Activated CD4-positive, alpha-beta memory T cell treated with anti-CD3 and anti-CD28 coated beads, Interleukin-2, amount 10 ng/mL, durations not matched to agents 7 days and 5 days (primary cell): ENCODE measurements at regions of chr9 and their contacts with region 1.

Region 1: GRCh38 chr9:100352727-100353505 is at the start of gene TEX10:
- DNase-seq: peak; percentile 89
- H3K4me3 Mint-ChIP-seq: peak within 1 kb of the TSS; percentile 91
- H3K27ac Mint-ChIP-seq: peak within 1 kb of the TSS; percentile 77
- H3K4me1 Mint-ChIP-seq: peaks cover 44% of the 10 kb centered on the region
- H3K27me3 Mint-ChIP-seq: no peaks in the 10 kb centered on the region
- total RNA-seq, gene TEX10: 14.8 to 16.5 TPM

Region 2: DNA sequence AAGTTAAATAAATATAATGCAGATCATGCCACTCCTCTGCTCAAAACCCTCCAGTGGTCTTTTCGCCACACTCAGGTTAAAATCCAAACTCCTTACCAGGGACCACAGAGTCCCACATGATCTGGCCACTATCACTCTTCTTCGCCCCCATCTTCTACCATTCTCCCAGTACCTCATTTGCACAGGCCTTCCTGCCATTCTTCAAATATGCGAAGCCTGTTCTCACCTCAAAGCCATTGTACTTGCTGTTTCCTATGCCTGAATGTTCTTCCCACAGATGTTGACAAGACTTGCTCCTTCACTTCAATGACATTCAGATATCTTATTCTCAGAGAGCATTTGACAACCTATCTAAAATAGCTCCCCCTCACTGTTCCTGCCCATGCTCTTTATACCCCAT is 11.0 kb before region 1 on chr9:
- CTCF ChIA-PET with region 1: interaction called, 4 read pairs
- POLR2A ChIA-PET with region 1: interaction called, 13 read pairs
- DNase-seq: no peak
- H3K4me3 Mint-ChIP-seq: no peak overlapping the region
- H3K27ac Mint-ChIP-seq: no peak overlapping the region
- H3K4me1 Mint-ChIP-seq: peaks cover 9% of the 10 kb centered on the region
- H3K27me3 Mint-ChIP-seq: no peaks in the 10 kb centered on the region